Endothelial cell of umbilical vein (primary cell): ENCODE measurements at regions of chr18 and their contacts with region 1.

Region 1: DNA sequence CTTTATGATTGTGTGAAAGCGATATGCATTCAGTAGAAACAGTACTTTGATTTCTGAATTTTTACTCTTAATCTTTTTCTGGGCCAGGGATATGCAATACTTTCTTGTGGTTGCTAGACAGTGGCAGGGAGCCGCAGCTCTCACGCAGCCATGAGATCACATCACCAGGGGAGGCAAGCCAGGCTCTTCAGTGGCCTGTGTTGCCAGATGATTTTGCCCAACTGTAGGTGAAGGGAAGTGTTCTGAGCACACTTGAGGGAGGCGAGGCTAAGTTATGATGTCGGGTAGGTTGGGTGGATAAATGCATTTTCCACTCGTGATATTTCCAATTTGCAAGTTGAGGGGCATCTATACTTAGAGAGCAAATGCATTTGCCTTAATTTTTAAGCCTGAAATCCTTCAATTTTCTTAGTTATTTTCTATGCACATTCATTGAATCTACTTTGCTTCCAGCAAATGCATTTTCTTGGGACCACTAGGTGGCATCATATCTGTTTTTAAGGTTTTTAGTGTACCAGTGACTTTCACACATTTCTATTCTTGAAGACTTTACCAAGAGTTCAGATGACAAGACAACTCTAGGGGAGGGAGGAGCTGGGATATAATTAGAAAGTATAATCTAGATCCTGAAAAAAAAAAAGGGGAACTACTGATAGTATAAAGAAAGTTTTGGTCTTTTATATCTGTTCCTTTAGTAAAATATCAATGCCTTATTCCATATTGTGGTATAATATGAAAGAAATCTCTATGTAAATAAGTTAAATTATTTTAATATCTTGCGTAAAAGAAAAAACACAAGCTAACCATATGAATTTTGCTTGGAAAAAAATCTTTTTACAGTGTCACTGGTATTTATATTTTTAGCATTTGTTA is 643.3 kb downstream of the SOCS6 start:
- DNase-seq: peak; percentile 63
- H3K4me3 ChIP-seq: no peak overlapping the region
- H3K27ac ChIP-seq: no peak overlapping the region
- H3K4me1 ChIP-seq: no peaks in the 10 kb centered on the region
- H3K27me3 ChIP-seq: no peaks in the 10 kb centered on the region
- CTCF ChIP-seq: peak; percentile 45 to 49
- POLR2A ChIP-seq: no peak

Region 2: GRCh38 chr18:71116535-71116934 is 184.4 kb after region 1 on chr18:
- CTCF ChIA-PET with region 1: no interaction called
- POLR2A ChIA-PET with region 1: no interaction called
- dilution Hi-C with region 1: no loop called
- intact Hi-C with region 1: loop called (anchors 10 kb)
- DNase-seq: peak; percentile 83
- H3K4me3 ChIP-seq: no peak overlapping the region
- H3K27ac ChIP-seq: peak overlapping the region; percentile 52
- H3K4me1 ChIP-seq: peaks cover 25% of the 10 kb centered on the region
- H3K27me3 ChIP-seq: no peaks in the 10 kb centered on the region
- CTCF ChIP-seq: no peak
- POLR2A ChIP-seq: no peak

Region 3: GRCh38 chr18:71784777-71785176 is 852.6 kb after region 1 on chr18:
- CTCF ChIA-PET with region 1: interaction called, 22 read pairs
- POLR2A ChIA-PET with region 1: no interaction called
- dilution Hi-C with region 1: no loop called
- intact Hi-C with region 1: loop called (anchors 1 kb)
- DNase-seq: peak; percentile 51
- H3K4me3 ChIP-seq: no peak overlapping the region
- H3K27ac ChIP-seq: no peak overlapping the region
- H3K4me1 ChIP-seq: no peaks in the 10 kb centered on the region
- H3K27me3 ChIP-seq: no peaks in the 10 kb centered on the region
- CTCF ChIP-seq: peak; percentile 41 to 62
- POLR2A ChIP-seq: no peak

Region 4: DNA sequence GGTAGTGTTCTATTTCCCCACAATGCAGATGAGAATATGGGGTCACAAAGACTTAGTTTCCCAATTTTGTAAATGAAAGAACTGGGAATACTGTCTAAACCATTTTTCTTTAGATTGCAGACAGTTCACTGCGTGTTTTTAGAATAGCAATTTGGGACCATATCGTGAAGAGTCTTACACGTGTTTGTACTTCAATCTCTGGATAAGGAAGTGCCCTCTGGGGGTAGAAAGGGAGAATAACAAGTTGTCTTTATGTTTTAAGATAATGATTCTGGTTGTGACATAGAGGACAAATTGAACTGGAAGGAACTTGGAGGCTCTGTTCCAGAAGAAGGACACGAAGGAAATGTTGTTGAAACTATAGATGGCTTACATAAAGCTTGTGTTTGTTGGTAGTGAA is 1154.2 kb after region 1 on chr18:
- CTCF ChIA-PET with region 1: no interaction called
- POLR2A ChIA-PET with region 1: no interaction called
- dilution Hi-C with region 1: no loop called
- intact Hi-C with region 1: loop called (anchors 1 kb)
- DNase-seq: peak; percentile 39
- H3K4me3 ChIP-seq: no peak overlapping the region
- H3K27ac ChIP-seq: no peak overlapping the region
- H3K4me1 ChIP-seq: no peaks in the 10 kb centered on the region
- H3K27me3 ChIP-seq: no peaks in the 10 kb centered on the region
- CTCF ChIP-seq: peak; percentile 9 to 42
- POLR2A ChIP-seq: no peak